Activated CD4-positive, alpha-beta T cell treated with anti-CD3 and anti-CD28 coated beads, Interleukin-2, amount 10 ng/mL, durations not matched to agents 24 days and 14 days (primary cell): ENCODE measurements at regions of chr22 and their contacts with region 1.

Region 1: DNA sequence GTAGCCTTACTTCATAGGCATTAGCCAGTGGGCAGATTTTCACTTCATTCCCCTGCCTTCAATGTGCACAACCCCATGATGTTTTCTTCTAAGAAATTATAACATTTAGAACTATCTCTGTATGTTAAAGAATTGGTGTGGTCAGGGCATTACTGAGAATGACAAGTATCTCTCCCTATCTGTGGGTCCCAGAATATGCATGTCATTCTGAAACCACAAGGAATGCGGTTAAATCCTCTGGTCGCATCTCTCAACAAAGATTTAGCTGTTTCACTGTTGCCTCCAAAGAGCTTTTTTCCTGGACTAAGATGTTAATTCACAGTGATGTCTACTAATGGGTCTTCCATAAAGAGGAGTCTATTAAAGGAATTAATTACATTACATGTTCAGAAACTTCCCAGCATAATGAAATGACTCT is 62.7 kb downstream of the LIF start:
- DNase-seq: peak; percentile 81
- H3K4me3 Mint-ChIP-seq: peak overlapping the region; percentile 61
- H3K27ac Mint-ChIP-seq: peak overlapping the region; percentile 96
- H3K4me1 Mint-ChIP-seq: peaks cover 82% of the 10 kb centered on the region
- H3K27me3 Mint-ChIP-seq: no peaks in the 10 kb centered on the region

Region 2: GRCh38 chr22:30079952-30080533 is 103.8 kb before region 1 on chr22 and contains the start of gene HORMAD2:
- intact Hi-C with region 1: no loop called
- DNase-seq: no peak
- H3K4me3 Mint-ChIP-seq: no peak within 1 kb of the TSS
- H3K27ac Mint-ChIP-seq: no peak within 1 kb of the TSS
- H3K4me1 Mint-ChIP-seq: peaks cover 10% of the 10 kb centered on the region
- H3K27me3 Mint-ChIP-seq: peaks cover 10% of the 10 kb centered on the region
- total RNA-seq, gene HORMAD2: not detected in 2 replicates

Region 3: DNA sequence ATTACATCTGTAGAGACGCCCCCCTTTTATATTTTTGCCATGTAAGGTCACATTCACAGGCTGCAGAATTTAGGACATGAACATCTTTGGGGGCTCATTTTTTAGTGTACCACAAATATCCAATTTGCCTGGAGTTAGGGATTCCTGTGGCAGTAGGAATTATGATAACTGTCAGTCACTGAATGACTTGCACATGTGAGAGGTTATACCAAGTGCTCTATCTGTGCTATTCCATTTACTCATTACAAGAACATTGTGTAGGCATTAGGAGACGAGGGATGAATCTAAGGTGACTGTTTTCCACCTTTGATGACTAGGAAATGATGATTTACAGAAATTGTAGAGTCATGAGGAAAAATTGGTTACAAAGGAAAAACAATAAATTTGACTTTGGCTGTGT is 16.6 kb before region 1 on chr22:
- intact Hi-C with region 1: loop called (anchors 1 kb)
- DNase-seq: no peak
- H3K4me3 Mint-ChIP-seq: no peak overlapping the region
- H3K27ac Mint-ChIP-seq: no peak overlapping the region
- H3K4me1 Mint-ChIP-seq: peaks cover 26% of the 10 kb centered on the region
- H3K27me3 Mint-ChIP-seq: no peaks in the 10 kb centered on the region

Region 4: DNA sequence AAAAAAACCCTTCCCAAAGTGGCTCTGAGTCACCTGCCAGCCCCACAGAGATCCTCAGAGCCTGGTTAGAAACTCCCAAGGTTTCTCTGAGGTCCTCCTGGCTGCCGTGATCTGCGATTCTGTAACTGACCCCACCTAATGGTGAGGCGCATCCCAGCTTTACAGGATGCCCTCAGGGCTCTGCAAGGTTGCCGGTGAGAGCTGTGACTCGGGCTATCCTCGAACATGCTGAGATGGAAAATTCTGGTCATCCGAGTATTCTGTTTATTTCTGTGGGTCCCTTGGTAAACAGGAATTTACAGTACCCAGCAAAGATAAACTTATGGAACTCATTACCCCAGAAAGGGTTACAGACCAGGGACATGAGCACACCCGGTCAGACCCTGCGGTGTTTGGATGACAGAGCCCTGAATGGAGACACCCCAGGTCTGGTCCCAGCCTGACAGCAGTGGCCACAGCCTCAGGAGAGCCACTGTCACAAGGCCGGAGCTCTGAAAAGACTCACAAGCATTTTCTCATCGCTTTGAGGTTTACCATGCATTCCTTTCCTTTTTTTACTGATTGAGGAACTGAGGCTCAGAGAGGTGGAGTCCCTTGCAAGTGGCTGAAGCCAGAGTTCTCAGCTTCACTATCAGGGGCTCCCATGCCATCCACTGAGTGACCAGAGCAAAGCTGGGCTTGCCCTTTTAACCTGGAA is 40.4 kb after region 1 on chr22:
- intact Hi-C with region 1: no loop called
- DNase-seq: no peak
- H3K4me3 Mint-ChIP-seq: no peak overlapping the region
- H3K27ac Mint-ChIP-seq: peak overlapping the region; percentile 12
- H3K4me1 Mint-ChIP-seq: peaks cover 84% of the 10 kb centered on the region
- H3K27me3 Mint-ChIP-seq: no peaks in the 10 kb centered on the region